ENCODE measurements at regions of chr1 and their contacts with region 1.

Region 1: DNA sequence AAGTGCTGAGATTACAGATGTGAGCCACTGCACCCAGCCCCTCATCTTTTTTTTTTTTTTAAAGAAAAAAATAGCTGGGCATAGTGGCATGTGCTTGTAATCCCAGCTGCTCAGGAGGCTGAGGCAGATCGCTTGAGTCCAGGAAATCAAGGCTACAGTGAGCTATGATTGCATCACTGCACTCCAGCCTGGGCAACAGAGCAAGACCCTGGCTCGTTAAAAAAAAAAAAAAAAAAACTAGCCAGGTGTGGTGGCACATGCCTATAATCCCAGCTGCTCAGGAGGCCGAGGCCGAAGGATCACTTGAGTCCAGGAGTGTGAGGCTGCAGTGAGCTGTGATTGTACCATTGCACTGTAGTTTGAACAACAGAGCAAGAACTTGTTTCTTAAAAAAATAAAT is 13.8 kb downstream of the SZRD1 start:
- DNase-seq: no peak
- ATAC-seq: no peak
- H3K4me3 ChIP-seq: no peak overlapping the region
- H3K27ac ChIP-seq: no peak overlapping the region
- H3K4me1 ChIP-seq: peaks cover 5% of the 10 kb centered on the region
- H3K27me3 ChIP-seq: no peaks in the 10 kb centered on the region
- CTCF ChIP-seq: no peak
- EP300 ChIP-seq: no peak
- POLR2A ChIP-seq: no peak
- RAD21 ChIP-seq: no peak

Region 2: GRCh38 chr1:16451841-16452528 is 71.1 kb after region 1 on chr1:
- CTCF ChIA-PET with region 1: interaction called, 4 read pairs
- POLR2A ChIA-PET with region 1: interaction called, 11 read pairs
- RAD21 ChIA-PET with region 1: interaction called, 3 read pairs
- SMC1A ChIA-PET with region 1: no interaction called
- in situ Hi-C with region 1: no loop called
- intact Hi-C with region 1: no loop called
- DNase-seq: no peak
- ATAC-seq: peak; percentile 76
- H3K4me3 ChIP-seq: peak overlapping the region; percentile 39; the same call in 1 of the 2 replicates
- H3K27ac ChIP-seq: peak overlapping the region; percentile 80
- H3K4me1 ChIP-seq: peaks cover 28% of the 10 kb centered on the region
- H3K27me3 ChIP-seq: no peaks in the 10 kb centered on the region
- CTCF ChIP-seq: no peak
- EP300 ChIP-seq: no peak
- POLR2A ChIP-seq: peak; percentile 47; the same call in 1 of the 2 replicates
- RAD21 ChIP-seq: no peak

Measured in GM12878 (cell line).